ENCODE measurements at regions of chr14 and their contacts with region 1.

Region 1: DNA sequence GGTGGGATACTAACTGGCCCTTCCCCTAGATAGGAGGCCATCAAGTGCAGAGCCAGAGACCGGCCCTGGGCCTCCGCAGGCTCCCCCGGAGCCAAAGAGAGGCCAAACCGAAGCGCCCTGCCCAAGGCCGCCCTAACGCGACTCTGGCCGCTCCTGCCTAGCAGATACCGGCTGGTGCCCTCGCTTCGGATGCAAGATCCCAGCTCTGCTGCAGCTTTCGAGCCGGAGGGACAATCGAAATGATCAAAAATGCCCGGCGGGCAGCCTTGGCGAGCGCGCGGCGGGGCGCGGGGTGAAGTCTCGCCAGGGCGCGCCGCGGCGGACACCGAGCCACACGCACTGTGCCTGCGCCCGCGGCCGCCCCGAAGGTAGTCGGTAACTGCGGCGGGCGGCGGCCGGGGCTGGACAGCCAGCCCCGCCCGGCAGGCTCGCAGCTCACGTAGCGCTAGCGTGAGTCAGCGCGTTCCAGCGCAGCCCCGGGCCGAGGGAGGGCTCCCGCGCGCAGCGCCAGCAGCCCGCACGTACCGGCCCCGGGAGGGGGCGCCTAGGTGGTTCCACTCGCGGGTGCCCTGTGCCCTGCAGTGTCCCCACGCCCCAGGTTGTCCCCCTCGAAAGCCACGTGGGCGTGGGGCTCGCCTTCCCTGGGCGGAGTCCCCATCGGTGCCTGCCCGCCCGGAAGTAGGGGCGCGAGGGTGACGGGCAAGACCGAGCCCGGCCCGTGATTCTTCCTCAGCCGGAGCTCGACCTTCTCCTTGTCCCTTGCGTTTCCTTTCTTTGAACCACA is 109.2 kb upstream of the EGLN3 start:
- DNase-seq: peak; percentile 90
- H3K4me3 ChIP-seq: peak overlapping the region; percentile 60 to 65 (median 61)
- H3K27ac ChIP-seq: peak overlapping the region; percentile 83 to 89 (median 84)
- H3K4me1 ChIP-seq: peaks cover 0 to 27% (median 23%) of the 10 kb centered on the region in 4 donors
- H3K27me3 ChIP-seq: no peaks in the 10 kb centered on the region
- CTCF ChIP-seq: peak in 1 of 4 experiments; percentile 15
- EP300 ChIP-seq: no peak
- POLR2A ChIP-seq: peak; percentile 18 to 41

Region 2: GRCh38 chr14:33950320-33951182 is 109.5 kb before region 1 on chr14 and contains the start of gene EGLN3:
- intact Hi-C with region 1: loop called (anchors 5 kb)
- DNase-seq: peak; percentile 95
- H3K4me3 ChIP-seq: peak within 1 kb of the TSS; percentile 63 to 83 (median 78)
- H3K27ac ChIP-seq: peak within 1 kb of the TSS; percentile 79 to 88 (median 85)
- H3K4me1 ChIP-seq: peaks cover 0 to 44% (median 28%) of the 10 kb centered on the region in 4 donors
- H3K27me3 ChIP-seq: no peaks in the 10 kb centered on the region
- CTCF ChIP-seq: no peak
- EP300 ChIP-seq: peak in 1 of 4 donors; percentile 49
- POLR2A ChIP-seq: peak; percentile 96 to 98
- total RNA-seq, gene EGLN3: 13.0 to 18.5 (median 13.2) TPM

Measured in sigmoid colon (tissue), 7 donors.